ENCODE measurements at regions of chr4 and their contacts with region 1.

Region 1: DNA sequence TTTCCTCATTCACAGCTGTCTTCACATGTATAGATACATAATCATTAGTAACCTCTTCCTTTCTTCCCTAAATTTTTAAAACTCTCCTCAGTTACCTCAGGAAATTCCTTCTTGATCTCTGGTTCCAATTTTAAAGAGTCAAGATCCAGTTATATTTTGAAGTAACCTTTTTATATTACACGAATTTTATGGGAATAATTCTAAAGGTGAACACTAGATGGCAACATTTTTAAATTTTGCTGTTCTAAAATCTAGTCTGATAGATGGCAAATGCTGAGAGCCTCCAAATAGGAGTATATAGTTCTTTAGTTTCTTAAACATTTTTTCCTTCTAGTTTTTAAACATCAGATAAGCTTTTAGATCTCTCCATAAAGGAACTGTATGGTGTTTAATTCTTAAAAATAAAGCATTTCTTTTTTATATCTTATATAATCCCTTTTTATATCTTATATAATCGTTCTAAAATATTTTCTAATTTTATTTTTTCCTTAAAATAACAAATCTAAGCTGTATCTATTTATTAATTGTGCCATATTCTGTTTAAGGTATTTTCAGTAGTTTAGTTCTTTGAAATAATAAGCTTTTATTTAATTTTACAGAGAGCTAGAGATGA is 37.9 kb upstream of the PAPSS1 start:
- DNase-seq: no peak
- H3K4me3 ChIP-seq: no peak overlapping the region
- H3K27ac ChIP-seq: no peak overlapping the region
- H3K4me1 ChIP-seq: no peaks in the 10 kb centered on the region
- H3K27me3 ChIP-seq: no peaks in the 10 kb centered on the region
- CTCF ChIP-seq: peak; percentile 6 to 75 (median 43)
- POLR2A ChIP-seq: no peak

Region 2: DNA sequence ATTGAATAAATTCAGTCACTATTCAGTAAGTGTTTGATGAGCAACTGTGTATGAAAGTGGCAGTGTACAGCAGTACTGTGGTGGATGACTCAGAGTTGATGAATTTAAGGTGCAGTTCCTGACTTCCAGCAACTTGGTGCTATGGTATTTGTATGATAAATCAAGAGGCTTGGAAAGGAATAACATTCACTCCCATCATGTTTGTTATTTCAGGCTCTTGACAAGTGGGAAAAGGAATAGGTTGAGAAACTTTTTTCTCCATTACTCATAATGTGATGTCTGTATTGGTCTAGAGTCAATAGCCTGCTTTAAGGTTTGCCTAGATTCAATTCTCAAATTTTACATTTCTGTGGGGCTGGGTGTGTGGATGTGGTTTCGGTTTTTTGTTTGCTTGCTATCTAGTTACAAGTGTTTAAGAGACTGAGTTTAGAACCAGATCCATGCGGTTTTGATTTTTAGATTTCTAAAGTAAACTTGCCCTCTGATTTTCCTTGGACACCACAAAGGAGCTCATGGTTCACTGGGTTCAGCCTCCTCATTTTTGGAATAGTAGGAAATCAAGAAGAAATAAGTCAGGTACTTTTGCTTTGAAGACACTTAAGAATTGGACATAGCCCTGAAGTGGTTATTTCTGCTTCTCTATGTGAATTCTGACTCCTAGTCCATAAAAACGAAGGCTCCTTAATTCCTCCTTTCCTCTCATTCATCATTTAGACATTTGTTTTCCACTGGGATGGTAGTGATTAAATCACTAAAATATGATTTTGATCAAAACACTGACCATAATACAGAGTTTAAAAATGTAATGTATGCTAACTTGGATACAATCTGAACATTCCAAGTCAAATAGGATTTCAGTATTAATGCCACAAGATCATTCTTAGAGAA is 138.4 kb after region 1 on chr4:
- intact Hi-C with region 1: no loop called
- DNase-seq: peak in 1 of 2 donors; percentile 10
- H3K4me3 ChIP-seq: no peak overlapping the region
- H3K27ac ChIP-seq: peak overlapping the region in 2 of 3 donors; percentile 52 to 58
- H3K4me1 ChIP-seq: peaks cover 32 to 35% of the 10 kb centered on the region in 2 donors
- H3K27me3 ChIP-seq: no peaks in the 10 kb centered on the region
- CTCF ChIP-seq: no peak
- POLR2A ChIP-seq: no peak

Region 3: DNA sequence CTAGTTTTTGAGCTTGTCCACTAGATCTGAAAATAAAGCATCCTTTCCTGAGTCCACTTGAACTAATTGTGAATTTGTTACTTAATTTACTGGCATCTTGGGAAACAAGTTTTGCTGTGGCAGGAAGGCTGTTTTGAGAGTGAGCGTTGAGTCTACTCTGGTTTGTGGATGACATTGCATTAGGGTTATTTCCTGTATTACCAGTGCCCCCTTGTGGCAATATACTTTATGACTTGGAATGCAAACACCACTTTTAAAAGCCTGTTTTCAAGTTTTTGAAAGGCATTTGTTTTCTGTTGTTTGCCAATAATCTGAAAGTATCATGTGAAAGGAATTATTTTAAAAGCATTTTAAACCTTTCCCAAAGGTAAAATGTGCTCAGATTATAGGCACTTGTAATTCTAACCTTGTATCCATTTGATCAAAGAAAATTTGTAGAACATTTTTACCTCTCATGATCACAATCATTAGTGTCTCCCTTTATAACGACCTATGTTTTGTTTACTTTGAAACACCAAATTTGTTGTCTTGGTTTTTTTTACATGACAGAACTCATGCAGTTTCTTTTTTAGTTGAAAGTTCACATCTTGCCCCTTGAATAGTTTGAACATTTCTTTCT is 155.4 kb after region 1 on chr4:
- intact Hi-C with region 1: loop called (anchors 5 kb)
- DNase-seq: peak; percentile 9 to 32
- H3K4me3 ChIP-seq: no peak overlapping the region
- H3K27ac ChIP-seq: no peak overlapping the region
- H3K4me1 ChIP-seq: no peaks in the 10 kb centered on the region
- H3K27me3 ChIP-seq: no peaks in the 10 kb centered on the region
- CTCF ChIP-seq: peak; percentile 57 to 92 (median 76)
- POLR2A ChIP-seq: no peak

Measured in thyroid gland (tissue), 4 donors.